T-cell (primary cell): ENCODE measurements at regions of chr6 and their contacts with region 1.

Region 1: GRCh38 chr6:13574149-13574570 is 241 bp upstream of the SIRT5 start:
- DNase-seq: peak; percentile 82 to 97 (median 92)
- ATAC-seq: peak; percentile 82 to 94 (median 90)
- H3K4me3 ChIP-seq: peak overlapping the region; percentile 23 to 97
- H3K4me3 Mint-ChIP-seq: peak overlapping the region; percentile 93 to 97 (median 97)
- H3K27ac ChIP-seq: peak overlapping the region; percentile 86
- H3K27ac Mint-ChIP-seq: peak overlapping the region; percentile 97
- H3K4me1 ChIP-seq: peaks cover 4 to 18% of the 10 kb centered on the region in 2 experiments
- H3K4me1 Mint-ChIP-seq: peaks cover 22 to 31% (median 29%) of the 10 kb centered on the region in 3 donors
- H3K27me3 ChIP-seq: no peaks in the 10 kb centered on the region
- H3K27me3 Mint-ChIP-seq: no peaks in the 10 kb centered on the region

Region 2: GRCh38 chr6:13328076-13328874 is 245.9 kb before region 1 on chr6 and contains the start of gene TBC1D7:
- CTCF ChIA-PET with region 1: interaction called in 1 of 2 experiments, 19 read pairs
- POLR2A ChIA-PET with region 1: interaction called, 3 read pairs
- DNase-seq: peak; percentile 82 to 97 (median 90)
- ATAC-seq: peak; percentile 90 to 92 (median 92)
- H3K4me3 ChIP-seq: peak within 1 kb of the TSS; percentile 85 to 98
- H3K4me3 Mint-ChIP-seq: peak within 1 kb of the TSS; percentile 86 to 93 (median 92)
- H3K27ac ChIP-seq: peak within 1 kb of the TSS; percentile 94
- H3K27ac Mint-ChIP-seq: peak within 1 kb of the TSS; percentile 96 to 99
- H3K4me1 ChIP-seq: peaks cover 7 to 9% of the 10 kb centered on the region in 2 experiments
- H3K4me1 Mint-ChIP-seq: peaks cover 20 to 33% (median 29%) of the 10 kb centered on the region in 3 donors
- H3K27me3 ChIP-seq: no peaks in the 10 kb centered on the region
- H3K27me3 Mint-ChIP-seq: no peaks in the 10 kb centered on the region
- total RNA-seq, gene TBC1D7: 12.7 to 16.2 (median 14.6) TPM

Region 3: GRCh38 chr6:13486679-13487121 is 87.5 kb before region 1 on chr6:
- CTCF ChIA-PET with region 1: interaction called in 1 of 2 experiments, 10 read pairs
- POLR2A ChIA-PET with region 1: interaction called in 1 of 2 experiments, 3 read pairs
- DNase-seq: peak in 32 of 35 experiments; percentile 21 to 68 (median 39)
- ATAC-seq: peak; percentile 42 to 54 (median 48)
- H3K4me3 ChIP-seq: peak overlapping the region; percentile 61 to 81
- H3K4me3 Mint-ChIP-seq: peak overlapping the region; percentile 85 to 94 (median 88)
- H3K27ac ChIP-seq: no peak overlapping the region
- H3K27ac Mint-ChIP-seq: peak overlapping the region in 1 of 2 donors; percentile 73
- H3K4me1 ChIP-seq: peaks cover 12 to 37% of the 10 kb centered on the region in 2 experiments
- H3K4me1 Mint-ChIP-seq: peaks cover 27 to 39% (median 32%) of the 10 kb centered on the region in 3 donors
- H3K27me3 ChIP-seq: peaks cover 0 to 19% of the 10 kb centered on the region in 2 experiments
- H3K27me3 Mint-ChIP-seq: peaks cover 10 to 17% of the 10 kb centered on the region in 2 donors

Region 4: DNA sequence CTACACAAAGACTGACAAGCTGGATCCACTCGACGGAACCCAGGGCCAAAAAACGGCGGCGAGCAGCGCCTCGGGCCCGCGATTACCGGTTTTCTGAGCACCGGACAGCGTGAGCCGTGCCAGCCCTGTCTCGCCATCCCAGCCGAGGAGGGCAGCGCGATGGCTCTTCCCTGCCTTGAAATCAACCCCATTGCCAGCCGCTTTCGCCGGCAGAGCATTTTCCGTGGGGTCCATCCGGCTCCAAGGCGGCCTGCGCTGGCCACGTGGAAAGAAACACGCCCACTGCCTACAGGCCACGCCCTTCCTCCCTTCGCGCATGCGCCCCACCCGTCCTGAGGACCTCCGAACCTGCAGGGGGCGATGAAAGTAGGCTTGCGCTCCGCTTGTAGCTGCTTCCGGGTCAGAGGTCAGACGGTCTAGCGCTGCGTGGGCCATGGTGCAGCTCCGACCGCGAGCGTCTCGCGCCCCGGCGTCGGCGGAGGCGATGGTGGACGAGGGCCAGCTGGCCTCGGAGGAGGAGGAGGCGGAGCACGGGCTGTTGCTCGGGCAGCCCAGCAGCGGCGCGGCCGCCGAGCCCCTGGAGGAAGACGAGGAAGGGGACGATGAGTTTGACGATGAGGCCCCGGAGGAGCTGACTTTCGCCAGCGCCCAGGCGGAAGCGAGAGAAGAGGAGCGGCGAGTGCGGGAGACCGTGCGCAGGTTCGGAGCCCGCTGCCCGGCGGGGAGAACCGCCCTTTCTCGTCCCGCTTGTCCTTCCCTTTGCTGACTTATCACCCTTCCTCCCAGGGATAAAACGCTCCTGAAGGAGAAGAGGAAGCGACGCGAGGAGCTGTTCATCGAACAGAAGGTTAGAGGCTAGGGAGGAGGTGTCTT is 41.0 kb after region 1 on chr6 and contains the start of gene NOL7:
- CTCF ChIA-PET with region 1: interaction called, 4 to 40 read pairs
- POLR2A ChIA-PET with region 1: interaction called in 1 of 2 experiments, 7 read pairs
- DNase-seq: peak; percentile 94 to 100 (median 98)
- ATAC-seq: peak; percentile 91 to 94 (median 93)
- H3K4me3 ChIP-seq: peak within 1 kb of the TSS; percentile 75 to 88
- H3K4me3 Mint-ChIP-seq: peak within 1 kb of the TSS; percentile 91 to 99 (median 91)
- H3K27ac ChIP-seq: peak within 1 kb of the TSS; percentile 75
- H3K27ac Mint-ChIP-seq: peak within 1 kb of the TSS; percentile 95 to 96
- H3K4me1 ChIP-seq: peaks cover 12 to 22% of the 10 kb centered on the region in 2 experiments
- H3K4me1 Mint-ChIP-seq: peaks cover 42 to 49% (median 45%) of the 10 kb centered on the region in 3 donors
- H3K27me3 ChIP-seq: no peaks in the 10 kb centered on the region
- H3K27me3 Mint-ChIP-seq: no peaks in the 10 kb centered on the region
- total RNA-seq, gene NOL7: 46.9 to 62.3 (median 59.3) TPM

Region 5: GRCh38 chr6:13624871-13625288 is 50.7 kb after region 1 on chr6:
- CTCF ChIA-PET with region 1: interaction called in 1 of 2 experiments, 12 read pairs
- POLR2A ChIA-PET with region 1: no interaction called
- DNase-seq: peak in 22 of 35 experiments; percentile 6 to 67 (median 14)
- ATAC-seq: peak; percentile 57 to 82 (median 66)
- H3K4me3 ChIP-seq: no peak overlapping the region
- H3K4me3 Mint-ChIP-seq: no peak overlapping the region
- H3K27ac ChIP-seq: no peak overlapping the region
- H3K27ac Mint-ChIP-seq: peak overlapping the region; percentile 21 to 60
- H3K4me1 ChIP-seq: no peaks in the 10 kb centered on the region
- H3K4me1 Mint-ChIP-seq: peaks cover 8 to 12% (median 8%) of the 10 kb centered on the region in 3 donors
- H3K27me3 ChIP-seq: no peaks in the 10 kb centered on the region
- H3K27me3 Mint-ChIP-seq: no peaks in the 10 kb centered on the region

Region 6: DNA sequence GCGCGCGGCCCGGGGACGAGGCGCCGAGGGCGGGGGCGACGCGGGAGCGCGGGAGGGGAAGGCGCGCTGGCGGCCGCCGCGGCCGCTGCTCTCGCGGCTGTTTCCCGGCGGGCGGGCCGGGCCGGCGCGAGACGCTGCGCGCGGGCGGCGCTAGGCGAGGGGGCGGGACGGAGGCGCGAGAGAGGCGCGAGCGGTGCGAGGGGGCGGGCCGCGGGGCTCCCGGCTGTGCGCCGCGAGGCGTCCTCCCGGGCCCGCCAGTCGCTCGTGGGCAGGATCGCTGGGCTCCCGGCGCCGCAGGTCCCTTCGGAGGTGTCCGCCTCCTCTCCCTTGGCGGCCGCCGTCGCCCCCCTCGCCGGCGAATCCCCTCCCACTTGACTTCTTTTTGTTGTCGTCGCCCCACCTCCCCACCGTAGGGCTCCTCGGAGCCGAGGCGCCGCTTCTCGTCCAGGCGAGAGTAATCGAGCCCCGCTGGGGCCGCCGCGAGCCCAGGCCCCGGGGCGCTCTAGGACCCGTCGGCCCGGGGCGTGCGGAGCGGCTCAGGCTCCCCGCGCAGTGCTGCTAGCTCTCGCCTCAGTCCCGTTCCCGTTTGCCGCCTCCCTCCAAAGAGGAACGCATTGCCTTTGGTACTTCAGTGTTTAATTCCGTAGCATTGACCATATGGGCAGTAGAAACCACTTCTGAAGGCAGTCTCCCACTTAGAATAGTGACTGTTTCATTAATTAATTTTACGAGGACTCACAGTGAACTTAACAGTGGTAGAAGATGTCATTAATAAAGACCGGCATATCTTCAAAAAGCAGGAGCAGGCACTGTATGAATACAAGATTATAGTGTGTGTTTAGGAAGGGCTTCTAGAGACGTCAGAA is 137.8 kb after region 1 on chr6 and contains the start of gene RANBP9:
- CTCF ChIA-PET with region 1: interaction called, 3 to 14 read pairs
- POLR2A ChIA-PET with region 1: no interaction called
- DNase-seq: peak; percentile 78 to 94 (median 85)
- ATAC-seq: peak; percentile 85 to 91 (median 87)
- H3K4me3 ChIP-seq: peak within 1 kb of the TSS; percentile 86
- H3K4me3 Mint-ChIP-seq: peak within 1 kb of the TSS; percentile 87 to 95 (median 94)
- H3K27ac ChIP-seq: peak within 1 kb of the TSS; percentile 92
- H3K27ac Mint-ChIP-seq: peak within 1 kb of the TSS; percentile 92 to 96
- H3K4me1 ChIP-seq: peaks cover 20 to 21% of the 10 kb centered on the region in 2 experiments
- H3K4me1 Mint-ChIP-seq: peaks cover 48 to 58% (median 55%) of the 10 kb centered on the region in 3 donors
- H3K27me3 ChIP-seq: no peaks in the 10 kb centered on the region
- H3K27me3 Mint-ChIP-seq: no peaks in the 10 kb centered on the region
- total RNA-seq, gene RANBP9: 44.9 to 59.4 (median 46.8) TPM

Region 7: DNA sequence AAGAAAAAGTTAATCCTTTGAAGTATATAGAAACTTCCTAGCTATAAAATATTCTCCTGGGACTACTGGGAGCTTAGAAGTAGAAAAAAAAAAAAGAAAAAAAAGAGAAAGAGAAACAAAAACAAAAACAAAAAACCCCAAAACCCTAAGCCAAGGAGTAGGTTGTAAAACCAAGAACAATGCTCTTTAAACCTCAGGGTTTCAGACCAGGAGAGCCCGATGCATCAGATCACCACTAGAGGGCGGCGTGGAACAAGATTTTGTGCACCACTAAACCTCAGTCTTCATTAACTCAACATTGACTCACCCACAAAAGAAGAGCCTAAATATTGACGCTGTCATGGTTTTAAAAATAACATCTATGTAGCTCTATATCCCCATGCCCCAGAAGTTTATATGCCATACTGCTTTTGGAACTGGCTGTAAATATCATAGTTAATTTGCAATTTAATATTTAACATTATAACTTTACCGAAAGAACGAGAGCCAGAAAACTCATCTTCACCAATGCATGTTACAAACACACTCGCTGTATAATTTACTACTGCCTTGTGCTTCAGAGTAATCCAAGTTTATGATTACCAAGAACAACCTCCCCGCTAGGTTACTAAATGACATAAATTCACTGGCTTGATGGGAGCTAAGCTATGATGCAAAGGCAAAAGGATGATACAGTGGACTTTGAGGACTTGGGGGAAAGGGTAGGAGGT is 221.0 kb after region 1 on chr6:
- CTCF ChIA-PET with region 1: interaction called in 1 of 2 experiments, 13 read pairs
- POLR2A ChIA-PET with region 1: no interaction called
- DNase-seq: peak; percentile 56 to 89 (median 77)
- ATAC-seq: peak; percentile 93 to 98 (median 96)
- H3K4me3 ChIP-seq: no peak overlapping the region
- H3K4me3 Mint-ChIP-seq: no peak overlapping the region
- H3K27ac ChIP-seq: no peak overlapping the region
- H3K27ac Mint-ChIP-seq: peak overlapping the region in 1 of 2 donors; percentile 12
- H3K4me1 ChIP-seq: no peaks in the 10 kb centered on the region
- H3K4me1 Mint-ChIP-seq: peaks cover 2 to 8% (median 7%) of the 10 kb centered on the region in 3 donors
- H3K27me3 ChIP-seq: no peaks in the 10 kb centered on the region
- H3K27me3 Mint-ChIP-seq: no peaks in the 10 kb centered on the region